HCT116 (cell line): ENCODE measurements at regions of chr1 and their contacts with region 1.

Region 1: GRCh38 chr1:103461161-103462105 is 64.1 kb upstream of the RNPC3 start:
- DNase-seq: peak; percentile 4
- ATAC-seq: no peak
- H3K4me3 ChIP-seq: no peak overlapping the region
- H3K27ac ChIP-seq: no peak overlapping the region
- H3K4me1 ChIP-seq: no peaks in the 10 kb centered on the region
- H3K27me3 ChIP-seq: no peaks in the 10 kb centered on the region
- CTCF ChIP-seq: peak; percentile 17 to 68 (median 38); a peak in 4 of 6 replicates
- POLR2A ChIP-seq: no peak
- RAD21 ChIP-seq: peak; percentile 57

Region 2: DNA sequence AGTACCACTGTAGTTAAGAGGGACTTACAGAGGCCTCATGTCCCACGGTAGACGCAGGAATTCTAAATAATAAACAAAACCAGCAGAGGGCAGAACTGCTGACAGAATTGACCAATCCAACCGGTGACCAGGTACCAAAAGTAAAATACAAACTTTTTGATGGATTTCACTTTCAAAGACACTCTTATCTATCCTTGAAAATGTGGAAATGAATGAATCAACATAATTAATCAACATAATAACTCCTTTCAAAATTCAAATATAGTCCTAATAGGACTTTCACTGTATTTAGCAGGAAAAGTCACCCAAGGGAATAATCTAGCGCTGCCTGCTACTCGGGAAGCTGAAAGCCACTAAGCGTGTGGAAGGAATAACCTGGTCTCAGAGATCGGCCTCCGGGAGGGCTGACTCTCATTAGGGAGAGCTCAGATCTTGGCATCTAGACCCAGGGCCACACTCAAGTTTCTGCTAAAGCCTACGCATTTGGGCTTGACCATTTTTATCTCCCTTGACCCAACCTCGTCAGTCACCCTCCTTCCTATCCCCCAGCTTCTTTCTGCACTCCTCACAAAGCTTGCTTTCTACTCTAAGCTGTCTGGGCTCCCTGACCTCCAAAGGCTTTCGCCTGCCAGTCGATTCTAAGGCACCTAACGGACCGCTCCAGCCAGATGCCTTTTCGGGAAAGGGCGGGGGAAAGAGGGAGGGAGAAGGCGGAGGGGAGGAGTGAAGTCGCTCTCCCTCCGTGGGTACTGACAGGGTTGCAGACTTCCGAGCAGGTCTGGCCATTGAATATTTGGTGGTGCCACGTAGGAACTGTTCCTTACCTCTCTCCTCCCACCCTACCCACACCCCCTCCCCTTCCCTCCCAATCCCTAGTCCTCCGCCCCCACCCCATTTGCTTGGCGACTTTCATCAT is 354.7 kb before region 1 on chr1:
- CTCF ChIA-PET with region 1: interaction called, 35 read pairs
- POLR2A ChIA-PET with region 1: no interaction called
- RAD21 ChIA-PET with region 1: interaction called in 1 of 2 experiments, 3 read pairs
- intact Hi-C with region 1: loop called (anchors 5 kb)
- DNase-seq: peak; percentile 0
- ATAC-seq: peak; percentile 53; the same call in 1 of the 2 replicates
- H3K4me3 ChIP-seq: no peak overlapping the region
- H3K27ac ChIP-seq: no peak overlapping the region
- H3K4me1 ChIP-seq: no peaks in the 10 kb centered on the region
- H3K27me3 ChIP-seq: no peaks in the 10 kb centered on the region
- CTCF ChIP-seq: peak; percentile 13 to 49 (median 38); a peak in 3 of 6 replicates
- POLR2A ChIP-seq: no peak
- RAD21 ChIP-seq: peak; percentile 30; the same call in 1 of the 2 replicates

Region 3: DNA sequence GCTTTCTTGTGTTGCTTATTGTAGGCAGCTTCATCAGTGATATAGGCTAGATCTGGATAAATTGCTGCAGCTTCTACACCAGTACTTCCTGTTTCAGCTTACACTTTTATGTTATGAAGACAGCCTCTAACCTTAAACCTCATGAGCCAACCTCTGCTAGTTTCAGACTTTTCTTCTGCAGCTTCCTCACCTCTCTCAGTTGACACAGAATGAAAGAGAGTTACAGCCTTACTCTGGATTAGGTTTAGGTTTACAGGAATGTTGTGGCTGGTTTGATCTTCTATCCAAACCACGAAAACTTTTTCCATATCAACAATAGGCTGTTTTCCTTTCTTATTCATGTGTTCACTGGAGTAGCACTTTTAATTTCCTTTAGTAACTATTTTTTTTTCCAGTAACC is 12.9 kb before region 1 on chr1:
- CTCF ChIA-PET with region 1: interaction called, 14 read pairs
- POLR2A ChIA-PET with region 1: no interaction called
- RAD21 ChIA-PET with region 1: no interaction called
- intact Hi-C with region 1: no loop called
- DNase-seq: no peak
- ATAC-seq: no peak
- H3K4me3 ChIP-seq: no peak overlapping the region
- H3K27ac ChIP-seq: no peak overlapping the region
- H3K4me1 ChIP-seq: no peaks in the 10 kb centered on the region
- H3K27me3 ChIP-seq: no peaks in the 10 kb centered on the region
- CTCF ChIP-seq: no peak
- POLR2A ChIP-seq: no peak
- RAD21 ChIP-seq: no peak